Aorta (tissue), 5 donors: ENCODE measurements at regions of chr15 and their contacts with region 1.

Region 1: GRCh38 chr15:96514607-96515285 is 184.2 kb downstream of the NR2F2 start:
- DNase-seq: no peak
- ATAC-seq: no peak
- H3K4me3 ChIP-seq: no peak overlapping the region
- H3K27ac ChIP-seq: no peak overlapping the region
- H3K4me1 ChIP-seq: no peaks in the 10 kb centered on the region
- H3K27me3 ChIP-seq: peaks cover 0 to 3% of the 10 kb centered on the region in 2 donors

Region 2: GRCh38 chr15:96466548-96466947 is 48.2 kb before region 1 on chr15:
- intact Hi-C with region 1: loop called in 1 of 2 experiments (anchors 5 kb)
- DNase-seq: no peak
- ATAC-seq: no peak
- H3K4me3 ChIP-seq: no peak overlapping the region
- H3K27ac ChIP-seq: no peak overlapping the region
- H3K4me1 ChIP-seq: no peaks in the 10 kb centered on the region
- H3K27me3 ChIP-seq: peaks cover 0 to 5% of the 10 kb centered on the region in 2 donors

Region 3: GRCh38 chr15:96657096-96657495 is 142.3 kb after region 1 on chr15:
- intact Hi-C with region 1: no loop called
- DNase-seq: no peak
- ATAC-seq: no peak
- H3K4me3 ChIP-seq: no peak overlapping the region
- H3K27ac ChIP-seq: no peak overlapping the region
- H3K4me1 ChIP-seq: no peaks in the 10 kb centered on the region
- H3K27me3 ChIP-seq: no peaks in the 10 kb centered on the region